Heart right ventricle (tissue), 16 donors: ENCODE measurements at regions of chr2 and their contacts with region 1.

Region 1: GRCh38 chr2:178213991-178214390 is 19.7 kb downstream of the OSBPL6 start:
- DNase-seq: no peak
- ATAC-seq: no peak
- H3K4me3 ChIP-seq: no peak overlapping the region
- H3K27ac ChIP-seq: no peak overlapping the region
- H3K4me1 ChIP-seq: no peaks in the 10 kb centered on the region
- H3K27me3 ChIP-seq: no peaks in the 10 kb centered on the region
- CTCF ChIP-seq: no peak

Region 2: GRCh38 chr2:178234648-178235047 is 20.7 kb after region 1 on chr2:
- intact Hi-C with region 1: loop called in 1 of 10 experiments (anchors 2 kb)
- DNase-seq: no peak
- ATAC-seq: no peak
- H3K4me3 ChIP-seq: no peak overlapping the region
- H3K27ac ChIP-seq: no peak overlapping the region
- H3K4me1 ChIP-seq: peaks cover 0 to 10% (median 3%) of the 10 kb centered on the region in 9 donors
- H3K27me3 ChIP-seq: no peaks in the 10 kb centered on the region
- CTCF ChIP-seq: no peak

Region 3: GRCh38 chr2:178280244-178280852 is 66.4 kb after region 1 on chr2:
- intact Hi-C with region 1: no loop called
- DNase-seq: peak in 1 of 2 donors; percentile 51
- ATAC-seq: peak in 6 of 8 donors; percentile 34 to 77 (median 58)
- H3K4me3 ChIP-seq: no peak overlapping the region
- H3K27ac ChIP-seq: no peak overlapping the region
- H3K4me1 ChIP-seq: peaks cover 0 to 20% (median 0%) of the 10 kb centered on the region in 9 donors
- H3K27me3 ChIP-seq: no peaks in the 10 kb centered on the region
- CTCF ChIP-seq: peak; percentile 73 to 86 (median 80)